GM10248 (cell line): ENCODE measurements at regions of chr9 and their contacts with region 1.

Region 1: DNA sequence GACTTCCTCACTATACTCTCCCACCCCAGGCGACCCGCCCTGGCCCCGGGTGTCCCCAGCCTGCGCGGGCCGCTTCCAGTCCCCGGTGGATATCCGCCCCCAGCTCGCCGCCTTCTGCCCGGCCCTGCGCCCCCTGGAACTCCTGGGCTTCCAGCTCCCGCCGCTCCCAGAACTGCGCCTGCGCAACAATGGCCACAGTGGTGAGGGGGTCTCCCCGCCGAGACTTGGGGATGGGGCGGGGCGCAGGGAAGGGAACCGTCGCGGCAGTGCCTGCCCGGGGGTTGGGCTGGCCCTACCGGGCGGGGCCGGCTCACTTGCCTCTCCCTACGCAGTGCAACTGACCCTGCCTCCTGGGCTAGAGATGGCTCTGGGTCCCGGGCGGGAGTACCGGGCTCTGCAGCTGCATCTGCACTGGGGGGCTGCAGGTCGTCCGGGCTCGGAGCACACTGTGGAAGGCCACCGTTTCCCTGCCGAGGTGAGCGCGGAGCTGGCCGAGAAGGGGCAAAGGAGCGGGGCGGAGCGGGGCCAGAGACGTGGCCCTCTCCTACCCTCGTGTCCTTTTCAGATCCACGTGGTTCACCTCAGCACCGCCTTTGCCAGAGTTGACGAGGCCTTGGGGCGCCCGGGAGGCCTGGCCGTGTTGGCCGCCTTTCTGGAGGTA is 2.1 kb downstream of the CA9 start:
- DNase-seq: peak; percentile 70
- CTCF ChIP-seq: no peak

Region 2: GRCh38 chr9:35436933-35437332 is 238.9 kb before region 1 on chr9:
- CTCF ChIA-PET with region 1: no interaction called
- POLR2A ChIA-PET with region 1: no interaction called
- DNase-seq: no peak
- CTCF ChIP-seq: no peak

Region 3: DNA sequence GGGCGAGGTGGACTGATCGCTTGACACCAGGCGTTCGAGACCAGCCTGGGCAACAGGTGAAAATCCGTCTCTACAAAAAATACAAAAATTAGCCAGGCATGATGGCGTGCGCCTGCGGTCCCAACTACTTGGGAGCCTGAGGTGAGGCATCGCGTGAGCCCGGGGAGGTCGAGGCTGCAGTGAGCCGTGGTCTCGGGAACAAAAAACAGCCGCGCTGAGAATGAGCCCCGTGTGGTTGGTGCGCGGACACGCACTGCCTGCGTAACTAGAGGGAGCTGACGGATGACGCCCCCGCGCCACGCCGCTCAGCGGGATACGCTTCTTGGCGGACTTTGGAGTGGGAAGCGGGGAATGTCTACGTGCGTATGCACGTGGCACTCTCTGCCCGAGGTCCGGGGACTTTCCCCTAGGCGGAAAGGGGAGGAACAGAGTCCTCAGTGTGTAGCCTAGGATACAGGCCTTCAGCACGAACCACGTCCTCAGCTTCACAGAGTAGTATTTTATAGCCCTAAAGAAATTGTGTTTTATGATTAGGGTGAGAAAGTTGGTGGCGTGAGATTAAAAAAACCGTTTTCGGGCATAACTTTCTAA is 18.2 kb before region 1 on chr9 and contains the start of gene RMRP:
- CTCF ChIA-PET with region 1: interaction called, 20 read pairs
- POLR2A ChIA-PET with region 1: no interaction called
- DNase-seq: peak; percentile 92
- CTCF ChIP-seq: no peak

Region 4: DNA sequence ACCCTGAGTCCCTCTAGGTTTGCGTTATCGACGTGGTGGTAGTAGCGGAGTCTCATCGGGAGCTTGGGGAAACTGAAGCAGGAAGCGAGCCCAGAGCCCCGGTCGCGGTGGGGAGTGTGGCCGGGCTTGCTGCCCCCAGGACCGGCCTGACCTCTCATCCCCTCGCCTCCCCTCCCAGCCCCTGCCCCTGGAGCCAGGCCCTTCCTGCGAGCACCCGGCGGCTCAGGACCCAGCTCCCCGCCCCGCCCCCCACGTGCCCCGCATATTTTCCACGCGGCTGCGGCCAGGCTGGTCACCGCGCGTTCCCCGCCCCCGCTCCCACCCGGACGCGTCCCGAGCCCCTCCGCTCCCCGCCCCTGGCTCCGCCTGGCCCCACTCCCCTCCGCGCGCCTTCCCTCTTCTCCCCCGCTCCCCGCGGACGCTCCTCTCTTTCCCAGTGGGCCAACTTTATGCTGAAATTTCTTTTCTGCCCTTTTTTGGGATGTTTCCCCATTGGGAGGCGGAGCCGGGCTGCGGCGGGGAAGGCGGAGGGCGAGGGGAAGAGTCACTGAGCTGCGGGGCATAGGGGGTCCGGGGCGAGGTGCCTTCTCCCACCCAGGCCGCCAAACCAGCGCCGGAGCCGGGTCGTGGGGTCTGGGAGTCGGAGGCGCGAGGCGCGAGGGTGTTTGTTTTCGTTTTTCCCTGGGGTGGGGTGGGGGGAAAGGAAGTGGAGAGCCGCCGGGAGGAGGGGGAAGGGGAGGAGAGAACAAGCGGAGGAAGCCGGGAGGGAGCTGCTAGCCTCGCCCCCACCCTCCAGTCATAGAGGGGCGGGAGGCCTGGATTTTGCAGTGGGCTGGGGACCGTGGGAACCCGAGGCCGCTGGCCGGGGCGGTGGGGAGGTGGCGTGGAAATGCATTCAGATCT is 14.8 kb after region 1 on chr9:
- CTCF ChIA-PET with region 1: interaction called, 37 read pairs
- POLR2A ChIA-PET with region 1: interaction called, 3 read pairs
- DNase-seq: peak; percentile 59
- CTCF ChIP-seq: no peak